ENCODE measurements at regions of chr3 and their contacts with region 1.

Region 1: GRCh38 chr3:123732473-123733157 is 147.8 kb upstream of the HACD2 start:
- DNase-seq: peak; percentile 99
- ATAC-seq: peak; percentile 91
- H3K4me3 ChIP-seq: no peak overlapping the region
- H3K27ac ChIP-seq: peak overlapping the region; percentile 92
- H3K4me1 ChIP-seq: peaks cover 47% of the 10 kb centered on the region
- H3K27me3 ChIP-seq: no peaks in the 10 kb centered on the region
- CTCF ChIP-seq: no peak

Region 2: GRCh38 chr3:123584988-123585937 is 147.4 kb before region 1 on chr3 and contains the start of gene HACD2:
- CTCF ChIA-PET with region 1: no interaction called
- POLR2A ChIA-PET with region 1: no interaction called
- intact Hi-C with region 1: loop called (anchors 5 kb)
- DNase-seq: peak; percentile 99
- ATAC-seq: peak; percentile 86
- H3K4me3 ChIP-seq: peak within 1 kb of the TSS; percentile 85
- H3K27ac ChIP-seq: peak within 1 kb of the TSS; percentile 83
- H3K4me1 ChIP-seq: peaks cover 35% of the 10 kb centered on the region
- H3K27me3 ChIP-seq: no peaks in the 10 kb centered on the region
- CTCF ChIP-seq: no peak
- total RNA-seq, gene HACD2: 43.8 and 47.3 TPM in 2 replicates

Region 3: GRCh38 chr3:123716411-123716810 is 16.2 kb before region 1 on chr3:
- CTCF ChIA-PET with region 1: no interaction called
- POLR2A ChIA-PET with region 1: no interaction called
- intact Hi-C with region 1: no loop called
- DNase-seq: no peak
- ATAC-seq: no peak
- H3K4me3 ChIP-seq: no peak overlapping the region
- H3K27ac ChIP-seq: no peak overlapping the region
- H3K4me1 ChIP-seq: no peaks in the 10 kb centered on the region
- H3K27me3 ChIP-seq: no peaks in the 10 kb centered on the region
- CTCF ChIP-seq: no peak

Region 4: GRCh38 chr3:123757281-123757940 is 24.8 kb after region 1 on chr3:
- CTCF ChIA-PET with region 1: no interaction called
- POLR2A ChIA-PET with region 1: interaction called, 18 read pairs
- intact Hi-C with region 1: no loop called
- DNase-seq: no peak
- ATAC-seq: peak; percentile 7
- H3K4me3 ChIP-seq: no peak overlapping the region
- H3K27ac ChIP-seq: no peak overlapping the region
- H3K4me1 ChIP-seq: peaks cover 26% of the 10 kb centered on the region
- H3K27me3 ChIP-seq: no peaks in the 10 kb centered on the region
- CTCF ChIP-seq: no peak

Region 5: DNA sequence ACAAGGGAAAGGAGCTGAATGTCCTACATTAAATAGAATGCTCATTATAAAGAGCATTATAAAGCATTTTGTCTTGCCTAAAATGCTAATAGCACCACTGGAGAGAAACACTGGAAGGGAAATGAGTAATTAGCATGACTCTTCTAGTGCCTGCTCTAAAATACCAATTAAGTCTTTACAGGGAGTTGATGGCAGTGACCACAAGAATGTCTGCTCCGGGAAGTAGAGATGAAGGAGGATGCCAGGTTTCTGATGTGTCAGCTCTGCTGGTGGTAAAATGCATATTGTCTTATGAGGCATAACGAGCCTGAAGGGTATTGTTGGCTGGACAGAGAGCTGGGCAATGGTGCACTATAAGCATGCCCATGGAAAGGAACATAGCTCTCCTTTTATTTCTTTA is 102.0 kb after region 1 on chr3:
- CTCF ChIA-PET with region 1: no interaction called
- POLR2A ChIA-PET with region 1: no interaction called
- intact Hi-C with region 1: loop called (anchors 2 kb)
- DNase-seq: peak; percentile 89
- ATAC-seq: peak; percentile 97
- H3K4me3 ChIP-seq: no peak overlapping the region
- H3K27ac ChIP-seq: no peak overlapping the region
- H3K4me1 ChIP-seq: peaks cover 13% of the 10 kb centered on the region
- H3K27me3 ChIP-seq: no peaks in the 10 kb centered on the region
- CTCF ChIP-seq: no peak

Region 6: GRCh38 chr3:123859177-123859576 is 126.6 kb after region 1 on chr3:
- CTCF ChIA-PET with region 1: no interaction called
- POLR2A ChIA-PET with region 1: no interaction called
- intact Hi-C with region 1: no loop called
- DNase-seq: no peak
- ATAC-seq: no peak
- H3K4me3 ChIP-seq: no peak overlapping the region
- H3K27ac ChIP-seq: no peak overlapping the region
- H3K4me1 ChIP-seq: no peaks in the 10 kb centered on the region
- H3K27me3 ChIP-seq: no peaks in the 10 kb centered on the region
- CTCF ChIP-seq: no peak

Region 7: DNA sequence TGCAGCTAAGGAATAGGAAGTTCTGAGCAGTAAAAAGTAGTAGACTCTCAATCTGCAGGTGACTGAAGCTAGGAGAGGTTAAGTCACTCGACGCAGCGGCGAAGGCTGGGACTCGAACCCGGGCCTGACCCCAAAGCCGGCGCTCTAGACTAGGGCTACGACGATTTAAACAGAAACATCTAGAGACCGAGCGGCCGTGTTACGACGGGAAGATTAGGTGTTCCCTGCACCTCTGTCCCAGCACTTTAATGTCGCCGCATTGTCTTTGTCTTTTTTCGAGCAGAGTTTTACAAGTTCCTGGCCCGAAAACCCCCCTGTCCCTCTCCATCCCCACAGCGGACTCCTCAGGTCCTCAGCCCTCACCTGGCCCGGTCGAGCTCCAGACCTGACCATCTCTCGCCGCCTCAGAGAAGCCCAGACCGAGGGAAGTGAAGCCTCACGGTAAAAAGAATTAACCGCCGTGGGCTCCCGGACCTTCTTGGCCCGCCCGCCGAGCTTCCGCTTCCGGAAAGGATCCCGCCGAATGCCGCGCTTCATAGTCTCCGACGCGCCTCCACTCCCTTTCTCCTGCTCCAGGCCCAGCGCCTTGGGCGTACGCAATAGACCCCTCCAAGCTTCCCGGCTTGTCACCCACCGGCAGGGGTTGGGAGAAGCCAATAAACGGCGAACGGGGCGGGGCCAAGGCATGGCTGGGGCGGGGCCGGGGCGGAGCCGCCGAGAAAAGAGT is 228.3 kb after region 1 on chr3 and contains the start of gene CCDC14:
- CTCF ChIA-PET with region 1: no interaction called
- POLR2A ChIA-PET with region 1: no interaction called
- intact Hi-C with region 1: loop called (anchors 5 kb)
- DNase-seq: peak; percentile 98
- ATAC-seq: peak; percentile 98
- H3K4me3 ChIP-seq: peak within 1 kb of the TSS; percentile 84
- H3K27ac ChIP-seq: peak within 1 kb of the TSS; percentile 64
- H3K4me1 ChIP-seq: peaks cover 23% of the 10 kb centered on the region
- H3K27me3 ChIP-seq: no peaks in the 10 kb centered on the region
- CTCF ChIP-seq: no peak
- total RNA-seq, gene CCDC14: 40.9 and 62.6 TPM in 2 replicates

Region 8: GRCh38 chr3:124032648-124033359 is 300.2 kb after region 1 on chr3:
- CTCF ChIA-PET with region 1: interaction called, 14 read pairs
- POLR2A ChIA-PET with region 1: no interaction called
- intact Hi-C with region 1: no loop called
- DNase-seq: peak; percentile 85
- ATAC-seq: peak; percentile 92
- H3K4me3 ChIP-seq: peak overlapping the region; percentile 75
- H3K27ac ChIP-seq: no peak overlapping the region
- H3K4me1 ChIP-seq: peaks cover 3% of the 10 kb centered on the region; the same call in 1 of the 2 replicates
- H3K27me3 ChIP-seq: peaks cover 54% of the 10 kb centered on the region
- CTCF ChIP-seq: peak; percentile 71

Measured in PC-3 (cell line).